Psoas muscle (tissue), 8 donors: ENCODE measurements at regions of chr10 and their contacts with region 1.

Region 1: DNA sequence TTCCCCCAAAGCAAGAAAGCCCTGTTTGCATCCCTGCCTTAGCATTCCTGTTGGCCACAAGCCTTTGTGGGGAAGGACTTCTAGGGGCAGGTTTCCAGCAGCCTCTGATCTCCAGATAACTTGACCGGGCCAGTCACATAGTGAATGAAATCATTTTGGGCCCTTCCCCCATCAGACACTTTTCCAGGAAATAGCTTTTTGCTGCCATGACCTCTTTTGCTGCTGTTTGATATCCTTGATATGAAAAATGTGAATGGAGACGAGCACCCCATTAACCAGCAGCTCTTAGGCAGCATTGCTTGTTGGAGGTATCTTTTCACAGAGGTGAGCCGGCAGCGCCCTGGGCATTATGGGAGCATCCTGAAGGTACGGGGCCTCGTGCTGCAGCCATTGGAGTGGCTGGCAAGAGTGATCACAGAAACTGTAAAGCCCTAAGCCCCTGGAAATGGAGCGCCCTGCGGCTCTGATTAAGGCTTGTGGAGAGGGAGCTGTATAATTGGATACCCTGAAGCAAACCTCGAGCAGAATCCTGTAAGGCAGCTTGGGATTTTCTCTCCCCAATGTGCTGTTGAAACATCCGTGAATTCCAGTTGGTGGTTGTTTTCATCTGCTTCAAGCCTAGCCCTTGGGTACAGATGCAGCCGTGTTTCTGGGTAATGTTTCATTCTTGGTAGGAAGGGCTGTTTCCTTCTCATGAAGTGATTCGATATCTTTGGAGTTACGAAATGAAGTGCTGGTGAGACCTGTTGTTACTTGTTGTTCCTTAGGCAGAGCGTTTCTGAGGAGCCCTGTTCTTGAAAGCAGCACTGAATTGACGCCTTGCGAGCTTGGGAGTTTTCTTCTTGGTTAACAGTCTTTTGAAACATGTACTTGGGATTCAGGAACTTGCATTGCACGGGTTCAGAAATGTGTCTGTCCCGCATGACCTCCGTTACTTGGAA is 179.0 kb downstream of the PTEN start:
- DNase-seq: no peak
- ATAC-seq: peak; percentile 84 to 92 (median 88)
- H3K4me3 ChIP-seq: peak overlapping the region; percentile 49
- H3K27ac ChIP-seq: peak overlapping the region; percentile 78
- H3K4me1 ChIP-seq: peaks cover 19% of the 10 kb centered on the region
- H3K27me3 ChIP-seq: no peaks in the 10 kb centered on the region
- CTCF ChIP-seq: no peak

Region 2: DNA sequence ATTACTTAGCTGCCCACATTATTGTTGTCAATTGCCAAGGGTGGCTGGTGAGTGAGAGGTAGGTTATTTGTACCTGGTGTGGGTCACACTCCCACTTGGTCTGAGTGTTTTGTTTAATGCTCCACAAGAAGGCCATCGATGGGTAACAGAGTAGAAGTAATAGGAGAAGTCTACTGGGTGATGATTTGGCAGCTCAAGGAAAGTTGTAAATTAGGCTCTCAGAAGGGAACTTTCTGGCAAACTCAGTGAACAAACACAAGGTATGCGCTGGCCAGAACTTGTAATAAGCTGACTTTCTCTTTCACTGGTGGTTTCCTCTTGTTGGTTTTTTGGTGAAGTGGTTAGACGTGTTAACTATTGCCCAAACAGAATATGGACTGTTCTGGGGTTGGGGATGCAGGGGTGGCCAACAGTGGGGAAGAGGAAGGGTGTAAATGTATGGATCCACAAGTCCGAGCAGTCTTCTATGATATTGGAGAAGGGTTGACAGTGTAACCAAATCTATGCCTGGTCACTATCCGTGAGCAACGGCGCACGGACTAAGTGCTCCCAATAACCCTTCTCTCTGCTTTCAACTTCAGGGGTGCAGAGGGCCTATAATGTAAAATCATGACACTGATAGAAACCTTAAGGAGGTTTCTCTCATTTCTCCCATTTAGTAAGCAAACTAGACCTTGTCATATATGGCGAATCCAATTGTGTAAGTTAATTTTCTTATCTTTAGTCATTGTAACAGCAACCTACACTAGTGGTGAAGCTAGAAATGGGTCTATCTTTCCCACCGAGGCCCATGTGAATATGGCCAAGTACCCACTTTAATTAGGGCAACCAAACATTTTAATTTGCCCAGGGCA is 33.8 kb after region 1 on chr10:
- intact Hi-C with region 1: loop called in 1 of 2 experiments (anchors 5 kb)
- DNase-seq: no peak
- ATAC-seq: peak in 3 of 4 donors; percentile 55 to 80 (median 63)
- H3K4me3 ChIP-seq: peak overlapping the region; percentile 26
- H3K27ac ChIP-seq: peak overlapping the region; percentile 19
- H3K4me1 ChIP-seq: peaks cover 9% of the 10 kb centered on the region
- H3K27me3 ChIP-seq: no peaks in the 10 kb centered on the region
- CTCF ChIP-seq: no peak